Colonic mucosa (tissue), 4 donors: ENCODE measurements at regions of chr5 and their contacts with region 1.

Region 1: DNA sequence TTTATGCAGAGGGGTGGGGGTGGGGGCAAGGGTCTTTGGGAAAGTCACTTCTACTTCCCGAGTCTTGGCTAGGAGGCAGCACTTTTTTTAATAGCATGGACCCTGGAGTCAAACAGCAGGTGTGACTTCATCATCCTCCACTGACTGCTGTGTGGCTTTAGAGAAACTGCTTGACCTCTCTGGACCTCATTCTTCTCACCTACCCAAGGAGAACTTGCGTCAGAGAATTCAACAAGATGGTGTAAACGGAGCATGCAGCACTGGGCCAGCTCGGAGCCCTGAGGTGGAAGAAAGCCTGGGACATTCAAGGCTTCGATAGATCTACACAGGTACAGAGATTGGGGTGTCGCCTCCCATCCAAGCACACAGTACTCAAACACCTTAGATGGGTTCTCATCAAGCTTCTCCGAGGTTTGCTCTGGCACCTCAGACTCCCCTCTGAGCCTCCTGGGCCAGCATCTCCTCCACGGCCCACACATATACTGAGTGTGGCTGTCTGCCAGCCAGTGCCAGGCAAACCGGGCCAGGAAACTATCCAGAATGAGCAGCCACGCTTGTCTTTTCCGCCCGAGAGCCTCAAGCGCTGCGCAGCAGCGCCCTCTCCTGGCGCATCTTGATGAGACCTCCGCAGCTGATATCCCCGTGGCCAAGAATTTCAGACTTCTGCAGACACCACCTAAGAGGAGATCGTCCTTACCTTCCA is 4.6 kb upstream of the SLC25A48 start:
- DNase-seq: peak; percentile 79
- H3K4me3 ChIP-seq: no peak overlapping the region
- H3K27ac ChIP-seq: no peak overlapping the region
- H3K4me1 ChIP-seq: no peaks in the 10 kb centered on the region
- H3K27me3 ChIP-seq: peaks cover 11% of the 10 kb centered on the region
- CTCF ChIP-seq: peak; percentile 71

Region 2: DNA sequence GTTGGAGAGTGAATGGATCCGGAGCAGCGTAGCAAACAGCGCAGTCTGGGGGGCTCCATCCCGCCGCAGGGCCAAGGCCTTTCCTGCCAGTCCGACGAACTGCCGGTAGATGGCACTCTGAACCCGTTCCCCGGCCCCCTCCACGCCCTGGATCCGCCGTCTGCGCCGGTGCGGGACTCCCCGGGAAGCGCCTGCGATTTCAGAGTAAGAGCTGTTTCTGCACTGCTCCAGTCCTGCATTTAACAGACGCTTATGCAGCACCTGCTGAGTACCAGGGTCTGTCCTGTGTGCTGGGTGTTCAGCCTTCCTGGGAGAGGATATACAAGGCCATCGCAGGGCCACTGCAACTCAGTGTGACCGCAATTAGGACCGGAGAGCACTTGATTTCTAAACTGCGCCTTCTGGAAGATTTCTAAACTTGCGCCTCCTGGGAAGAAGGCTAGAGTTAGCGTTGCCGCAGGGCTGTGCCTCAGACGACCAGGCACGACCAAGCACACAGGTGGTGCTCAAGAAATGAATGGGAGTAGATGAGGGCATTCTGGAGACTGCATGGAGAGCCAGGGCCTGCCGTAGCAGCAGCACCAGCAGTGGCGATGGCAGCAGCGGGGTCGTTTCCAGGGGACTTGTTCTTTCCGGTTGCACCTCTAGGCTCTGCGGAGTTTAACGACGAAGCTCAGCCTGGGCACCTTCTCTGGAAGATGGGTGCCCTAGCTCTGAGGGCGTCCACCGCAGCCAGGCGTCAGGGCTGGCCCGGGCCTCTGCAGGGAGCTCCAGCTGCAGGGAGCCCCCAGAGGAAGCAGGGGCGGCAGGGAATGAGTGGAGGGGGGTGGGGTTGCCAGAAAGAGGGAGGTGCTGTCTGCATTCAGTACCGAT is 363.4 kb before region 1 on chr5:
- intact Hi-C with region 1: loop called (anchors 10 kb)
- DNase-seq: peak; percentile 66
- H3K4me3 ChIP-seq: no peak overlapping the region
- H3K27ac ChIP-seq: no peak overlapping the region
- H3K4me1 ChIP-seq: no peaks in the 10 kb centered on the region
- H3K27me3 ChIP-seq: no peaks in the 10 kb centered on the region
- CTCF ChIP-seq: peak; percentile 75

Region 3: GRCh38 chr5:135560858-135561257 is 269.0 kb before region 1 on chr5:
- intact Hi-C with region 1: loop called (anchors 5 kb)
- DNase-seq: peak; percentile 85
- H3K4me3 ChIP-seq: no peak overlapping the region
- H3K27ac ChIP-seq: no peak overlapping the region
- H3K4me1 ChIP-seq: peaks cover 5% of the 10 kb centered on the region
- H3K27me3 ChIP-seq: no peaks in the 10 kb centered on the region
- CTCF ChIP-seq: peak; percentile 76

Region 4: GRCh38 chr5:135864503-135865435 is 34.9 kb after region 1 on chr5:
- intact Hi-C with region 1: no loop called
- DNase-seq: no peak
- H3K4me3 ChIP-seq: no peak overlapping the region
- H3K27ac ChIP-seq: no peak overlapping the region
- H3K4me1 ChIP-seq: peaks cover 4% of the 10 kb centered on the region
- H3K27me3 ChIP-seq: no peaks in the 10 kb centered on the region
- CTCF ChIP-seq: no peak

Region 5: DNA sequence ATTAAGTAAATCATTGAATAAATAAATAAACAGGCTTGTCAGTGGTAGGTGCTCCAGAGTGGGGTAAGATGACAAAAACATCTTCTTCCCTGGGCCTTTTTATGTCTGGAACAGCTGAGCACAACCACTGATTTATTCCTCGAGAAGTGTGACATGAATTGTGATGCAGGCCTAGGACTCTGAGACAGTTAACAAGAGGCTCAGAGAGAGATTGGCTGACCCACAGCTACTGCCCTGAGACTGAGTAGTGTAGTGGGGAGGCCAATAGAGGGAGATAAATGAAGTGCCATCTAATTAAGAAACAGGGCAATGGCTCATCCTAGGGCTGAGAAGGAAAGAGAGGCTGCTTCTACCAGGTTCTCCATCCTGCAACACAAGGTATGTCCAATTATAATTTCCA is 904.8 kb after region 1 on chr5:
- intact Hi-C with region 1: no loop called
- DNase-seq: no peak
- H3K4me3 ChIP-seq: no peak overlapping the region
- H3K27ac ChIP-seq: no peak overlapping the region
- H3K4me1 ChIP-seq: no peaks in the 10 kb centered on the region
- H3K27me3 ChIP-seq: no peaks in the 10 kb centered on the region
- CTCF ChIP-seq: no peak